Heart right ventricle (tissue), 16 donors: ENCODE measurements at regions of chr9 and their contacts with region 1.

Region 1: GRCh38 chr9:81022177-81022576 is 667.2 kb downstream of the TLE1 start:
- DNase-seq: no peak
- ATAC-seq: no peak
- H3K4me3 ChIP-seq: no peak overlapping the region
- H3K27ac ChIP-seq: no peak overlapping the region
- H3K4me1 ChIP-seq: no peaks in the 10 kb centered on the region
- H3K27me3 ChIP-seq: no peaks in the 10 kb centered on the region
- CTCF ChIP-seq: no peak

Region 2: GRCh38 chr9:80968611-80969010 is 53.6 kb before region 1 on chr9:
- intact Hi-C with region 1: loop called in 1 of 10 experiments (anchors 5 kb)
- DNase-seq: no peak
- ATAC-seq: no peak
- H3K4me3 ChIP-seq: no peak overlapping the region
- H3K27ac ChIP-seq: no peak overlapping the region
- H3K4me1 ChIP-seq: no peaks in the 10 kb centered on the region
- H3K27me3 ChIP-seq: no peaks in the 10 kb centered on the region
- CTCF ChIP-seq: no peak